ENCODE measurements at regions of chr9 and their contacts with region 1.

Region 1: GRCh38 chr9:26892251-26893029 is at the start of gene CAAP1:
- DNase-seq: peak; percentile 89
- ATAC-seq: peak; percentile 96
- H3K4me3 ChIP-seq: peak within 1 kb of the TSS; percentile 95 to 100 (median 100)
- H3K27ac ChIP-seq: peak within 1 kb of the TSS; percentile 100
- H3K4me1 ChIP-seq: peaks cover 24% of the 10 kb centered on the region
- H3K27me3 ChIP-seq: no peaks in the 10 kb centered on the region; a peak in 1 of 5 replicates
- CTCF ChIP-seq: peak; percentile 66
- EP300 ChIP-seq: 0 out of 4 replicates have a peak, but pooled peaks of 1 of the 2 experiments have one; percentile 25
- POLR2A ChIP-seq: peak; percentile 90 to 96
- RAD21 ChIP-seq: peak; percentile 58
- total RNA-seq, gene CAAP1: 34.8 and 40.2 TPM in 2 replicates

Region 2: GRCh38 chr9:26946753-26947727 is 54.6 kb after region 1 on chr9 and contains the start of gene PLAA:
- CTCF ChIA-PET with region 1: no interaction called
- POLR2A ChIA-PET with region 1: interaction called, 17 read pairs
- in situ Hi-C with region 1: no loop called
- intact Hi-C with region 1: loop called (anchors 1 kb)
- DNase-seq: peak; percentile 86
- ATAC-seq: peak; percentile 98
- H3K4me3 ChIP-seq: peak within 1 kb of the TSS; percentile 90 to 98 (median 93)
- H3K27ac ChIP-seq: peak within 1 kb of the TSS; percentile 98
- H3K4me1 ChIP-seq: peaks cover 56% of the 10 kb centered on the region
- H3K27me3 ChIP-seq: no peaks in the 10 kb centered on the region; a peak in 1 of 5 replicates
- CTCF ChIP-seq: peak; percentile 59
- EP300 ChIP-seq: 0 out of 4 replicates have a peak, but pooled peaks of 1 of the 2 experiments have one; percentile 5
- POLR2A ChIP-seq: peak; percentile 67 to 77
- RAD21 ChIP-seq: peak; percentile 36; the same call in 1 of the 2 replicates
- total RNA-seq, gene PLAA: 22.9 and 25.2 TPM in 2 replicates

Region 3: DNA sequence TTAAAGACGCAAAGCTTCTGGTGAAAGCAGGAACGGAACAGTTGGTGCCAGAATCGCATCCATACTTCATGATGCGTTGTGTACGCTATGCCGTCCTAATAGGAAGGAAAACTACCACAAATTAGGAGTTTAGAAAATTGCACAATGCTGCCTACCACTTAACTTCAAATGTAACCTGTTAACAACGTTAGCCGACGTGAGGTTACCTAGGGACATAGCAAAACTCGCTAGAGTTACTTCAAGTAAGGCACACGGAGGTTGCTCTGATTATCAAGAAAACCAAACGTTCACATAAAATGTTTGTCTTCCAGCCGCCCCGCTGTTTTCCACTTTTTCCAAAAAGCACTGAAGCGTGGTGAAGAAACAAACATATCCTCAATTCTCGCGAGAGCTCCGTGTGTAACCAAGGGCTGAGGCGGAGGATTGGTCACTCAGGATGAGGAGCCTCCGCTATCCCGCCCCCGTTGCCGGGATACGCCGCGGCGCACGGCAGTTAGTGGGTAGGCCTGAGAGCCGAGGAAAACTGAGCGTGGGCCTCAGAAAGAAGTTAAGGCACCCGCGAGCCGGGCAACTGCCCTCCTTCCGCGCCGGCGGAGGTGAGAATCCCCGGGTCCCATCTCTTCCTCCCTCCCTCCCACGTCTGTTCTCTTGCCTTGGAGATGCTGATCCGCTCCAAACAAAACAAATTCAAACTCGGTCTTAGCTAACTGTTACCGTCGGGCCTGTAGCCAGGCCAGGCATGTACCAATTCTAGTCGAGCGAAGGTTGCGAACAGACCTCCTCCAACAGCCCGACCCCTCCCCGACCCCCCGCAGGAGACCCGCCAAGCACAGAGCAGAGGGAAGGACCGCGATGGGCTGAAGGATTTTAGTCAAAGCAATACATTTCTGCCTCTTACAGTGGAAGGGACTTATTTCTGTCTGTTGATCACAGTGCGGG is 63.8 kb after region 1 on chr9 and contains the start of gene IFT74:
- CTCF ChIA-PET with region 1: no interaction called
- POLR2A ChIA-PET with region 1: interaction called, 24 read pairs
- in situ Hi-C with region 1: no loop called
- intact Hi-C with region 1: no loop called
- DNase-seq: peak; percentile 96
- ATAC-seq: peak; percentile 100
- H3K4me3 ChIP-seq: peak within 1 kb of the TSS; percentile 76 to 90 (median 84)
- H3K27ac ChIP-seq: peak within 1 kb of the TSS; percentile 85
- H3K4me1 ChIP-seq: peaks cover 26% of the 10 kb centered on the region
- H3K27me3 ChIP-seq: no peaks in the 10 kb centered on the region
- CTCF ChIP-seq: no peak
- EP300 ChIP-seq: no peak
- POLR2A ChIP-seq: peak; percentile 72 to 84
- RAD21 ChIP-seq: no peak
- total RNA-seq, gene IFT74: 12.3 and 18.5 TPM in 2 replicates

Region 4: GRCh38 chr9:26975693-26976059 is 83.2 kb after region 1 on chr9:
- CTCF ChIA-PET with region 1: no interaction called
- POLR2A ChIA-PET with region 1: no interaction called
- in situ Hi-C with region 1: no loop called
- intact Hi-C with region 1: loop called (anchors 2 kb)
- DNase-seq: peak; percentile 32
- ATAC-seq: peak; percentile 86
- H3K4me3 ChIP-seq: no peak overlapping the region
- H3K27ac ChIP-seq: no peak overlapping the region
- H3K4me1 ChIP-seq: peaks cover 9% of the 10 kb centered on the region
- H3K27me3 ChIP-seq: no peaks in the 10 kb centered on the region
- CTCF ChIP-seq: peak; percentile 66
- EP300 ChIP-seq: no peak
- POLR2A ChIP-seq: no peak
- RAD21 ChIP-seq: 0 out of 2 replicates have a peak, but pooled peaks have one; percentile 28

Region 5: GRCh38 chr9:27276193-27277030 is 384.0 kb after region 1 on chr9:
- CTCF ChIA-PET with region 1: no interaction called
- POLR2A ChIA-PET with region 1: no interaction called
- in situ Hi-C with region 1: no loop called
- intact Hi-C with region 1: loop called (anchors 5 kb)
- DNase-seq: peak; percentile 45
- ATAC-seq: peak; percentile 74
- H3K4me3 ChIP-seq: no peak overlapping the region
- H3K27ac ChIP-seq: no peak overlapping the region
- H3K4me1 ChIP-seq: peaks cover 5% of the 10 kb centered on the region; the same call in 1 of the 2 replicates
- H3K27me3 ChIP-seq: peaks cover 1 to 10% of the 10 kb centered on the region in 2 experiments; a peak in 2 of 5 replicates
- CTCF ChIP-seq: peak; percentile 73
- EP300 ChIP-seq: no peak
- POLR2A ChIP-seq: no peak
- RAD21 ChIP-seq: no peak

Measured in HepG2 (cell line).